ENCODE measurements at regions of chr15 and their contacts with region 1.

Region 1: DNA sequence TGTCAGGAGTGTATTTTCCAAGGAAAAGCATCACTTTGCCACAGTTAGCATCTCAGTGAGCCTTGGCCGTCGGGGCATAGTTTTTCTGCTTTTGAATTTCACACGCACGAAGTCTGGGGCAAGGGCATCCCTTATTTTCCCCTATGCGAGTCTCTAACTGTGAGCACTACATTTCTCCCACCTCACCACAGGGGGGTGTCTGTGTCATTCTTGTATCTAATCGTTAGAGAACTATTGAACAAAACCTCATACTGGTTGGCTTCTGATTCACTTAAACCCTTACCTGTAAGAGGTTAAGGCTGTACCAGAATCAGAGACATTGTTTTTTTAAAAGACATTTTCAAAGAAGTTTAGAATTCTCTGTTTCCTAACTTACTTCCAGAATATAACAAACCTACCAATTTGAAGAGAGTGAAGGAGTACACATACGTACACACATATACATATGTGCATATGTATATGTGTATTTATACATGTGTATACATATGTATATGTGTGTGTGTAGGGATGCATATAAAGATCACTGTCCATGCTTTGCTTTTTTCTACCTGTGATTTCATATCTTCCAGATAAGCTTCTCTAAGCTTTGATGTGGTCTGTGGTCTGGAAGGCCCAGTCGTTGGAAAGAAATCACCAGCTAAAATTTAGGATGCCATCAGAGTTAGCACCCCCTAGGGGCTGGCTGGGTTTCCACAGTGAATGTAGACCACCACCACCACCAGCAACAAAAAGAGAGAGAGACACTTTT is 49.4 kb downstream of the MYZAP start:
- DNase-seq: no peak

Region 2: DNA sequence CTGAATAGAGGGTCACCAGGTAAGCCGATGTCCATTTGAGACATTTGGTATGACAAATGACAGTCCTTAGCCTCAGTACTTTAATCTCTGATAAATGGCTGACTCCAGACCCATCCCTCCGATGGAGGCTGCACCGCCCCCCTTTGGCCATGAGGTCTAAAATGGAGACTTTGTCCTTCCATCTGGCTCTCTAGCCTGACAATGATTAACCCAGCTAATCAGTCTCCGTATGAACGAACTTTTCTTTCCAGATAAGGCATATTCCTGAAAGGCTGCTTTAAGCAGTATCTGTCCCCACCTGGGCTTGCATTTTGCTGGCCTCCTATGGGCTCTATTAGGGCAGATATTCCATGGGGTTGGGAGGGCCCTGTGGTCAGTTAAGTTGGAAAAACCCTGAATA is 60.2 kb before region 1 on chr15:
- in situ Hi-C with region 1: no loop called
- DNase-seq: no peak

Region 3: DNA sequence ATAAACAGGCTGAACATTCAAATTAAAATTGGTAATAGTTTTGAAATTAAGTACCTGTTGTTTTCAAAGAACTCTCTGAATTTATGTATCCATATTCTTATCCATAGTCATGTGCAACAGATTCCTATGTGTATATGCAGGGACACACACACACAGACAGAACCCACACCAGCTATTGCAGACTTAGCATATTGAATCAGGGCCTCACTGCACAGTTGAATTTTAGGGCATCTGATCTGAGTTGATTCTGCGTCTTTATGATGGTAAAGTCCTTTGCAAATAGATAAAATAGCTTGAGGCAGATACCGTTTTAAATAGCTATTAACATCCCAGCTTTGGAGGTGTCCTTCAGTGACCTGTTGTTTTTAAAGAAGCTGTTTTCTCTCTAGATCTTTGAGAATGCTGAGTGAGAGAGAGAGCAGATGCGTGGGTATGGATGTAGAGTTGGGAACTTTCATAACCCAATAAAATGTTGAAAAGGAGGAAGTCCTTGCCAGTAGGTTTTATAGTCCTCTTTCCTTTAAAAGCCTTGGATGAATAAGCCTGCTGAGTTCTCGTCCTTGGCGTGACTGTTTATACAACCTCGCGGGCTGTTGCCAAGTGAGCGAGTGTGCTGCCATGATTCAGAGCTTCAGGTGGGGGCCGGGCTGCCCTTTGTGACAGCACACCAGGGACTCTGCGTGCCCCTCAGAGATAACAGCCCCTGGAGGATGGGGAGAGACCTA is 31.1 kb before region 1 on chr15:
- in situ Hi-C with region 1: loop called (anchors 5 kb)
- DNase-seq: no peak

Region 4: GRCh38 chr15:57816599-57816998 is 175.5 kb after region 1 on chr15:
- in situ Hi-C with region 1: no loop called
- DNase-seq: no peak